ENCODE measurements at regions of chr1 and their contacts with region 1.

Region 1: GRCh38 chr1:159936273-159936904 is 9.0 kb downstream of the IGSF9 start:
- DNase-seq: peak in 5 of 10 donors; percentile 45 to 78 (median 55)
- H3K4me3 ChIP-seq: no peak overlapping the region
- H3K27ac ChIP-seq: no peak overlapping the region
- H3K27me3 ChIP-seq: peaks cover 0 to 18% (median 0%) of the 10 kb centered on the region in 45 donors
- CTCF ChIP-seq: peak; percentile 78 to 100 (median 97)

Region 2: GRCh38 chr1:159924981-159925712 is 11.2 kb before region 1 on chr1 and contains the start of gene TAGLN2:
- intact Hi-C with region 1: no loop called
- DNase-seq: peak in 8 of 10 donors; percentile 40 to 78 (median 64)
- H3K4me3 ChIP-seq: peak within 1 kb of the TSS; percentile 51 to 78 (median 68)
- H3K27ac ChIP-seq: peak within 1 kb of the TSS in 56 of 59 donors; percentile 8 to 89 (median 79)
- H3K27me3 ChIP-seq: peaks cover 0 to 24% (median 0%) of the 10 kb centered on the region in 45 donors
- CTCF ChIP-seq: peak in 1 of 56 donors; percentile 9
- total RNA-seq, gene TAGLN2: 21.2 to 87.9 (median 41.1) TPM

Region 3: DNA sequence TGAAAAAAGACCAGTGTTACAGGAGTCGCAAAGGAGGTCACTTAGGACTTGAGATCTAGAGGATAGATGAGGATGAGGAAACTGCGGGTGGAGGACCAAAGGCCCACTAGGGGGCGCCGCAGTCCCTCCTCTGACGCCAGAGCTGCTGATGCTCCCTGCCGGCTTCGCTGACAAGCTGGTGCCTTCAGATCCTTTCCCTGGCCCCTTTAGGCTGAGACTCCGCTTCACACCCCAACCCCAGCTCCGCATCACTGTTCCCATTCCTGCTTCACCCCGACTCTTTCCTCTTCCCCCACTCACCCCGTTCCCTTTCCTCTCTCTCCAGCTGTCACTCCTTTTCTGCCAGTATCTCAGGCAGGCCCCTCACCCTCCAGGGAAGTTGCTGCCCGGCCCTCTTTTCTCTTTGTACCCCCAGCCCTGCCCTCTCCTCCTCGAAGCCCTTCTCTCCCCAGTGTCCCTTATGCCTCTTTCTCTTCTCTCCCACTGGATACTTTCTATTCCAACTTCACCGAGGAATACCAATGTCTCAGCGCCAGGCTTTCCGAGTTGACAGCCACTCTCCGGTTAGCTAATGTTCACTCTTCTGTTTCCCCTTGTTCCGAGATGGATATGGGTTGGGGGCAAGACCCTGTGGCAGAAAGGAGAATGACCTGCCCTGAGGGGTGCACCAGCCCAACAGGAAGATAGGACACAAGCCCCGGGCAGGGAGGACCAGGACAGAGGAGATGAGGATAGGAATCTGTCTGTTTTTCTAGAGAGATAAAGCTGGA is 149.5 kb after region 1 on chr1:
- intact Hi-C with region 1: loop called in 1 of 2 experiments (anchors 5 kb)
- DNase-seq: peak; percentile 92 to 96 (median 95)
- H3K4me3 ChIP-seq: peak overlapping the region in 52 of 59 donors; percentile 6 to 79 (median 34)
- H3K27ac ChIP-seq: peak overlapping the region; percentile 75 to 100 (median 97)
- H3K27me3 ChIP-seq: no peaks in the 10 kb centered on the region
- CTCF ChIP-seq: peak; percentile 67 to 98 (median 94)